ENCODE measurements at regions of chr2 and their contacts with region 1.

Region 1: DNA sequence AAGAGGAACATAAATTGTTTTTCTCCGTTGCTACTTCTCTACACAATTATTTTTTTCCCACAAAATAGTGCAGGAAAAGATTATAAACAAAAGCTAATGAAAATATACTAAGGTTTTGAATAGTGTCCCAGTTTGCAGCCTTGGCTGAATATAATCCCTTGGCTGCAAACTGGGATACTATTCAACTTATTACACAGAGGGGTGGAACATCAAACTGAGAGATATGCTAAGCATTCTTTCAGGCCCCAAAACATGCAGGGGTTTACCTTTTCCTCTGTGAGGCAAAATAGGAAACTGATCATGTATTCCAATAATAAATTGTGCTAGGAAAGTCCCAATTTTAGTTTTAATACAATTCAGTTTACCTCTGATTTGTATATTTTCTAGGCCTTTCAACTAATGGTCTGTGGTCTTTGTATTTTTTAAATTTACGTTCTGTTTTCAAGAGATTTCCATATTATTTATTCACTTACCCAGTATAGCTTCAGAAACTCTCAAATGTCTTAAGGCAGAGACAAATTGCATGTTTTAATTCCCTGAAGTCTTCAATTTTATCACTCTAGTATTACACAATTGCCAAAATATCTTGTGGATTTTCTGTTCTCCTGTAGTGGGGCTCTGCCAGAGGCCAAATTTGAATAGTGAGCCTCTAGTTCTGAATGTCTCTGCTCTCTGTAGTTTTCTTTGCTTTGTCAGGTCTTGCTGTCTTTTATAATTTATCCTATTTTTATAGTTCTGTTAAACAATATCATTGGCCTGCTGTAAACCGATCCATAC is 63.9 kb downstream of the PPP1R1C start:
- DNase-seq: no peak
- ATAC-seq: peak in 3 of 4 donors; percentile 61 to 64 (median 63)
- H3K4me3 ChIP-seq: no peak overlapping the region
- H3K27ac ChIP-seq: peak overlapping the region in 7 of 12 donors; percentile 12 to 56 (median 20)
- H3K4me1 ChIP-seq: peaks cover 0 to 34% (median 20%) of the 10 kb centered on the region in 12 donors
- H3K27me3 ChIP-seq: no peaks in the 10 kb centered on the region
- CTCF ChIP-seq: no peak
- POLR2A ChIP-seq: no peak

Region 2: DNA sequence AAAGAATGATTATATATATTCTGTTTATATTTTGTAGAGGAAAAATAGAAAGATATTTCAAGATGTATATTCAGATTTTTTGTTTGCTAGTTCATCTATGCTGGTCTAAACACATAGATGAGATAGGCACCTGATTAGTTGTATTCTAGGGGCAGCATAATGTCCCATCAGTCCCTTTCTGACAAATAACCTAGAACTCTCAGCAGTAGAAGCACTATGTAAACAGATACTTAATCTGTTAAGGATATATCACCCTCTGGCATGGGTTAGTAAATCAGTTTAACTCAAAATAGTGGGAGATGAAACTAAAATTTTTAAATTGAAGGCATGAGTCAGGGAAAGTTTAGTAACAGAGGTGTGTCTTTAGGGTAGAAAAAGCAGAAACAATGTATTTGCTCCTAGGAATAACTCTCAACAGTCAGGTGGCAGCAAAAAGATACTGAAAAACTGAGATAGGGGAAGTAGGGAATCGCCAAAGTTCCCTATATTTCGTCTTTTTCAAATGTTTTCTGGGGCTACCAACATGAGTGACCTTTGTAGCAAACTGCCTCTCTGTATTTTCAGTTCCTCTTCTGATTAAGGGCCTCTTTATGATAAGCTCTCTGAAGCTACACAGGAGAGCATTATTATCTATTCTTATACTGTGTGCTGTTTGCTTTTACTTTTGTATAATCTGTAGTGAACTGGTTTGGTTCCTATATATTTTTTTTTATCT is 58.2 kb before region 1 on chr2:
- intact Hi-C with region 1: loop called in 2 of 10 experiments (anchors 5 kb)
- DNase-seq: no peak
- ATAC-seq: peak in 3 of 4 donors; percentile 34 to 62 (median 36)
- H3K4me3 ChIP-seq: no peak overlapping the region
- H3K27ac ChIP-seq: peak overlapping the region in 11 of 12 donors; percentile 24 to 82 (median 58)
- H3K4me1 ChIP-seq: peaks cover 0 to 19% (median 10%) of the 10 kb centered on the region in 12 donors
- H3K27me3 ChIP-seq: no peaks in the 10 kb centered on the region
- CTCF ChIP-seq: no peak
- POLR2A ChIP-seq: no peak

Measured in heart left ventricle (tissue), 16 donors.